ENCODE measurements at regions of chr19 and their contacts with region 1.

Region 1: GRCh38 chr19:1113033-1113985 is 9.5 kb downstream of the GPX4 start:
- DNase-seq: peak; percentile 67 to 92 (median 89)
- ATAC-seq: peak; percentile 97
- H3K4me3 ChIP-seq: no peak overlapping the region
- H3K4me3 Mint-ChIP-seq: no peak overlapping the region
- H3K27ac ChIP-seq: peak overlapping the region in 1 of 2 experiments; percentile 56
- H3K27ac Mint-ChIP-seq: no peak overlapping the region
- H3K4me1 ChIP-seq: peaks cover 14% of the 10 kb centered on the region
- H3K4me1 Mint-ChIP-seq: peaks cover 4% of the 10 kb centered on the region
- H3K27me3 ChIP-seq: no peaks in the 10 kb centered on the region
- H3K27me3 Mint-ChIP-seq: no peaks in the 10 kb centered on the region
- CTCF ChIP-seq: peak; percentile 85

Region 2: GRCh38 chr19:947265-948036 is 165.9 kb before region 1 on chr19:
- CTCF ChIA-PET with region 1: no interaction called
- POLR2A ChIA-PET with region 1: no interaction called
- intact Hi-C with region 1: no loop called
- DNase-seq: peak in 1 of 9 experiments; percentile 55
- ATAC-seq: no peak
- H3K4me3 ChIP-seq: no peak overlapping the region
- H3K4me3 Mint-ChIP-seq: no peak overlapping the region
- H3K27ac ChIP-seq: no peak overlapping the region
- H3K27ac Mint-ChIP-seq: no peak overlapping the region
- H3K4me1 ChIP-seq: peaks cover 1% of the 10 kb centered on the region
- H3K4me1 Mint-ChIP-seq: no peaks in the 10 kb centered on the region
- H3K27me3 ChIP-seq: no peaks in the 10 kb centered on the region
- H3K27me3 Mint-ChIP-seq: no peaks in the 10 kb centered on the region
- CTCF ChIP-seq: no peak

Region 3: GRCh38 chr19:1173845-1174809 is 60.8 kb after region 1 on chr19 and contains the start of gene SBNO2:
- CTCF ChIA-PET with region 1: interaction called, 10 read pairs
- POLR2A ChIA-PET with region 1: interaction called, 3 read pairs
- intact Hi-C with region 1: no loop called
- DNase-seq: peak; percentile 82 to 95 (median 89)
- ATAC-seq: peak; percentile 92
- H3K4me3 ChIP-seq: peak within 1 kb of the TSS; percentile 64 to 77
- H3K4me3 Mint-ChIP-seq: peak within 1 kb of the TSS; percentile 89
- H3K27ac ChIP-seq: peak within 1 kb of the TSS; percentile 70 to 73
- H3K27ac Mint-ChIP-seq: peak within 1 kb of the TSS; percentile 94
- H3K4me1 ChIP-seq: peaks cover 23% of the 10 kb centered on the region
- H3K4me1 Mint-ChIP-seq: peaks cover 26% of the 10 kb centered on the region
- H3K27me3 ChIP-seq: no peaks in the 10 kb centered on the region
- H3K27me3 Mint-ChIP-seq: no peaks in the 10 kb centered on the region
- CTCF ChIP-seq: no peak
- total RNA-seq, gene SBNO2: 123 to 134 TPM

Region 4: DNA sequence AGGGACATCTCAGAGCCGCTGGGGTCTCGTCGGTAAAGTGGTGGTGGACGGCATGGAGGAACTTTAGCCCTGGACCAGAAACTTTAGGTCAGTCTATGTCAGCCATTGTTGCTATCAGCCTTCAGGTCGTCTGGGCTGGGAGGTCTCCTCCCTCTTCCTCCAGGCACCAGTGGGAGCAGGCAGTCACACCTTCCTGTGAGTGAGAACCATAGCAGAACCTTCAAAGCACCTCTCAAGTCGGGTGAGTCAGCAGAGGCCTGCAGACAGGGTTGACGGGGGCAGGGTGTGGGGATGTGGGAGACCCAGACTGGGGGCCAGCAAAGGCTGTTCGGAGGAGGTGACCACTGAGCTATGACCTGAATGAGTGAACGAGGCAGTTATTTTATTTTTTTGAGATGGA is 76.1 kb after region 1 on chr19:
- CTCF ChIA-PET with region 1: interaction called, 62 read pairs
- POLR2A ChIA-PET with region 1: interaction called, 7 read pairs
- intact Hi-C with region 1: loop called (anchors 5 kb)
- DNase-seq: peak in 8 of 9 experiments; percentile 31 to 75 (median 59)
- ATAC-seq: peak; percentile 65
- H3K4me3 ChIP-seq: no peak overlapping the region
- H3K4me3 Mint-ChIP-seq: no peak overlapping the region
- H3K27ac ChIP-seq: peak overlapping the region in 1 of 2 experiments; percentile 28
- H3K27ac Mint-ChIP-seq: peak overlapping the region; percentile 32
- H3K4me1 ChIP-seq: peaks cover 22% of the 10 kb centered on the region
- H3K4me1 Mint-ChIP-seq: peaks cover 20% of the 10 kb centered on the region
- H3K27me3 ChIP-seq: no peaks in the 10 kb centered on the region
- H3K27me3 Mint-ChIP-seq: no peaks in the 10 kb centered on the region
- CTCF ChIP-seq: no peak

Region 5: GRCh38 chr19:1205114-1206062 is 92.1 kb after region 1 on chr19 and contains the start of gene STK11:
- CTCF ChIA-PET with region 1: interaction called, 19 read pairs
- POLR2A ChIA-PET with region 1: interaction called, 3 read pairs
- intact Hi-C with region 1: no loop called
- DNase-seq: peak; percentile 98 to 100 (median 99)
- ATAC-seq: peak; percentile 93
- H3K4me3 ChIP-seq: peak within 1 kb of the TSS; percentile 78 to 79
- H3K4me3 Mint-ChIP-seq: peak within 1 kb of the TSS; percentile 92
- H3K27ac ChIP-seq: peak within 1 kb of the TSS; percentile 51 to 62
- H3K27ac Mint-ChIP-seq: peak within 1 kb of the TSS; percentile 85
- H3K4me1 ChIP-seq: peaks cover 50% of the 10 kb centered on the region
- H3K4me1 Mint-ChIP-seq: peaks cover 43% of the 10 kb centered on the region
- H3K27me3 ChIP-seq: no peaks in the 10 kb centered on the region
- H3K27me3 Mint-ChIP-seq: no peaks in the 10 kb centered on the region
- CTCF ChIP-seq: no peak
- total RNA-seq, gene STK11: 38.0 to 43.4 TPM